Tibial artery (tissue), 4 donors: ENCODE measurements at regions of chr13 and their contacts with region 1.

Region 1: DNA sequence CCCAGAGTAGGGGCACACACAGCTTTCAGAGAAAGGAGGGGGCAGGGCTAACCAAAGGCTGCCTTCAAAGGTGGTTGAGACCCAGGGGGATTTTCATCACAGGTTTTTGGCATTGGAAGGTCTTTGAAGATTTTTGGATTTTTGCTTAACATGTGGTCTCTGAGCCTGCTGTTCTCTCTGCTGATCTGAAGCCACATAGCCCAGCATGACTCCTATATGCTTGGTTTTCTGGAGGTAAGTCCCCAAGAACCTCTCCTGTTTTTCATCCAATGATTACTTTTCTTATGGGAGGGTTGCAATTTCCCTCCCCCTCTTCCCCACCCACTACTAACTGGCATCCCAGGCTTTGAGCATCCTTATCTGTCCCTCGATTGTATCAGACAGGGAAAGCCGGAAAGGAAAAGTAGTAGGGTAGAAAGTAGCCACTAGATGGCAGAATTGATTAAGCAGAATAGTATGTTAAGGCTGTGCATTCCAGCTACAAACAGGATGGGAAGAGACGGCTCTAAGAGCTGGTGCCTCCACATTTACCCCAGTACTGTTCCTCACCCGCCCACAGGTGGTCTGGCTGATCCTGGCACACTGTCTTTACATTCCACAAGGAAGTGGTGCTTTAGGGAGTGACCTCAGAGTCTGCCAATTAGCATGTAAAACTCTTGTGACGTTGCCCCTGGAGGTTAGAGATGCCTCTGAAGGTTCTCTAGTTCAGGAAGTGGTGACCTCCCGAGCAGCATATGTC is 218.9 kb upstream of the EDNRB start:
- DNase-seq: no peak
- H3K4me3 ChIP-seq: no peak overlapping the region
- H3K27ac ChIP-seq: no peak overlapping the region
- H3K4me1 ChIP-seq: no peaks in the 10 kb centered on the region
- H3K27me3 ChIP-seq: no peaks in the 10 kb centered on the region
- CTCF ChIP-seq: peak; percentile 36 to 52

Region 2: DNA sequence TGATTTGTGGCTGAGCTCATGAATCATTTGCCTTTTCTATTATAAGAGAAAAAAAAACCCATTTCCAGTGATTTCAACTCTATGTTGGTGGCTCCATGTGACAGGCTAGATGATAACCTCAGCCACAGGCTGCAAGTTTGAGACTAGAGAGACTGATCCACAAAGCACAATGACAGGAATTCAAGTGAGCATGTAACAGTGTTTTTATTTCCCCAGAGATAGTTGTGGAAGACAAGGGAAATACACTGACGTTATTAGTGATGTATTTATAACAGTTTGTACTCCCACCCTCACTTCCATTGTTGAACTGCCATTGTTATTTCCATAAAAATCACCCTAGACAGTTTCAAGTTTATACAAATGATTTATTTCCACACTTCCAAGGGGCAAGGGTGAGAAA is 191.1 kb before region 1 on chr13:
- intact Hi-C with region 1: no loop called
- DNase-seq: no peak
- H3K4me3 ChIP-seq: no peak overlapping the region
- H3K27ac ChIP-seq: no peak overlapping the region
- H3K4me1 ChIP-seq: no peaks in the 10 kb centered on the region
- H3K27me3 ChIP-seq: no peaks in the 10 kb centered on the region
- CTCF ChIP-seq: no peak

Region 3: DNA sequence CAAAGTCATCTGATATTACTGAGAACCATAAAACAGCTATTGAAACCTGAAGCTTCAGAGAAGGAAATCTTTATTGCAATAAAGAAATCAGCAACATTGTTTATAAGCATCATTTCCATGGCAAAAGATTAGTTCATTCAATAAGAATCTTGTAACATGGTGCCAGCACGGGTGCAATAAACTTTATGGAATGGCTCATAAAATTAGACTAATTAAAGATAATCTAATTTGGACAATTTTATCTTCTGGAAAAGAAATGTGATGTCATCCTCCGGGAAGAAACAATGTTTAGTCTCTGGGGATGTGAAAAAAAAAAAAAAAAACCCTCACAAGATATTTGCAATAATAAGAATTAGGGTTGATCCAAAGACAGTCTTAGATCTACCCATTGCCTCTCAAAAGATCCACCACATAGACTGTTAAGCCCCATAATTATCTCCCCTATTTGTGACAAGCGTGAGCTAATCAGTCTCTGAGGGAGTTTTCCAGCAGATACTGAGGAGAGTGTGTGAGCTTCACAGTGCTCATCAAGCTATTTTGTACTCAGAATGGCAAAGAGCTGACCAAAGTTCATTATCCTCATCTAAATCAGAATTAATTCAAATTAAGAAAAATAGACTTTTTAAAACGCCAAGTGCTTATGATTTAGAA is 78.0 kb after region 1 on chr13:
- intact Hi-C with region 1: no loop called
- DNase-seq: no peak
- H3K4me3 ChIP-seq: no peak overlapping the region
- H3K27ac ChIP-seq: no peak overlapping the region
- H3K4me1 ChIP-seq: no peaks in the 10 kb centered on the region
- H3K27me3 ChIP-seq: no peaks in the 10 kb centered on the region
- CTCF ChIP-seq: no peak

Region 4: GRCh38 chr13:78978381-78978998 is 840.9 kb after region 1 on chr13:
- intact Hi-C with region 1: loop called (anchors 5 kb)
- DNase-seq: no peak
- H3K4me3 ChIP-seq: no peak overlapping the region
- H3K27ac ChIP-seq: no peak overlapping the region
- H3K4me1 ChIP-seq: no peaks in the 10 kb centered on the region
- H3K27me3 ChIP-seq: no peaks in the 10 kb centered on the region
- CTCF ChIP-seq: peak; percentile 51 to 56